ENCODE measurements at regions of chr11 and their contacts with region 1.

Region 1: GRCh38 chr11:44727373-44728287 is 868 bp downstream of the TSPAN18 start:
- DNase-seq: peak; percentile 87
- ATAC-seq: peak; percentile 89
- H3K4me3 ChIP-seq: peak overlapping the region; percentile 54
- H3K27ac ChIP-seq: peak overlapping the region; percentile 65
- H3K4me1 ChIP-seq: peaks cover 24% of the 10 kb centered on the region
- H3K27me3 ChIP-seq: peaks cover 10% of the 10 kb centered on the region
- CTCF ChIP-seq: peak; percentile 95

Region 2: DNA sequence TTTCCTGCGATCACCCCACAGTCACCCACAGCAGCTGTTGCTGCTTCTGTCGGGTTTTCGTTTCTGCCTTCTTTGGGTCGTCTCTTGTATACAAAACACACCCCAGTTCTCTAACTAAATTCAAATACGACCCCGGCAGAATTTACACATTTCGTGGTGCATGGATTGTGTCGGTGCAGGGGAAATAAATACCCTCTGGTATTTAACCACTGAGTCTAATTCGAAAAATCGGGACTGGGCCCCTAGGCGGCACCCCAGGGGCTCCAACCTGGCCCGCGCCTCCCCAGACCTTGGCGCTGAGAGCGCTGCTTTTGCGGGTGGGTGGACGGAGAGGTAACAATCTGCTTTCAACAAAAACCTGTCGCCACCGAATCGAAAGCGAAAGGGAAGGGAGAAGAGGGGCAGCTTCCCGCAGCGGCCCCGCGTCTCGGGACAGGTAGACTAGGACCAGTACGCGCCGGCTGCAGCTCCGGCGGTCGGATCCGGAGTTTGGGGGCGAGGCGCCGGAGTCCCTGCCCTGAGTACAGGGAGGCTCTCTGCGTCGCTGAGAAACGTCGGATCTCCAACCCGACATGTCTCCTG is 422.1 kb before region 1 on chr11:
- intact Hi-C with region 1: no loop called
- DNase-seq: peak; percentile 73
- ATAC-seq: peak; percentile 50
- H3K4me3 ChIP-seq: peak overlapping the region; percentile 57
- H3K27ac ChIP-seq: no peak overlapping the region
- H3K4me1 ChIP-seq: peaks cover 30% of the 10 kb centered on the region
- H3K27me3 ChIP-seq: peaks cover 88% of the 10 kb centered on the region
- CTCF ChIP-seq: no peak

Region 3: DNA sequence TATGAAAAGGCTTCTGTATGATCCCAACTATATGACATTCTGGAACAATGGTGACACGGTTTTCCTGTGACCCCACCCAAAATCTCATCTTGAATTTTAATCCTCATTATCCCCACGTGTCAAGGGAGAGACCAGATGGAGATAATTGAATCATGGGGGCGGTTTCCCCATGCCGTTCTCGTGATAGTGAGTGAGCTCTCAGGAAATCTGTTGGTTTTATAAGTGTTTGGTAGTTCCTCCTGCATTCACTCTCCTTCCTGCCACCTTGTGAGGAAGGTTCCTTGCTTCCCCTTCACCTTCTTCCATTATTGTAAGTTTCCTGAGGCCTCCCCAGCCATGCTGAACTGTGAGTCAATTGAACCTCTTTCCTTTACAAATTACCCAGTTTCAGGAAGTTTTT is 53.9 kb before region 1 on chr11:
- intact Hi-C with region 1: no loop called
- DNase-seq: no peak
- ATAC-seq: no peak
- H3K4me3 ChIP-seq: no peak overlapping the region
- H3K27ac ChIP-seq: no peak overlapping the region
- H3K4me1 ChIP-seq: no peaks in the 10 kb centered on the region
- H3K27me3 ChIP-seq: no peaks in the 10 kb centered on the region
- CTCF ChIP-seq: no peak

Region 4: GRCh38 chr11:44893846-44894617 is 166.4 kb after region 1 on chr11:
- intact Hi-C with region 1: loop called (anchors 5 kb)
- DNase-seq: peak; percentile 75
- ATAC-seq: peak; percentile 79
- H3K4me3 ChIP-seq: no peak overlapping the region
- H3K27ac ChIP-seq: no peak overlapping the region
- H3K4me1 ChIP-seq: no peaks in the 10 kb centered on the region
- H3K27me3 ChIP-seq: no peaks in the 10 kb centered on the region
- CTCF ChIP-seq: peak; percentile 82

Region 5: DNA sequence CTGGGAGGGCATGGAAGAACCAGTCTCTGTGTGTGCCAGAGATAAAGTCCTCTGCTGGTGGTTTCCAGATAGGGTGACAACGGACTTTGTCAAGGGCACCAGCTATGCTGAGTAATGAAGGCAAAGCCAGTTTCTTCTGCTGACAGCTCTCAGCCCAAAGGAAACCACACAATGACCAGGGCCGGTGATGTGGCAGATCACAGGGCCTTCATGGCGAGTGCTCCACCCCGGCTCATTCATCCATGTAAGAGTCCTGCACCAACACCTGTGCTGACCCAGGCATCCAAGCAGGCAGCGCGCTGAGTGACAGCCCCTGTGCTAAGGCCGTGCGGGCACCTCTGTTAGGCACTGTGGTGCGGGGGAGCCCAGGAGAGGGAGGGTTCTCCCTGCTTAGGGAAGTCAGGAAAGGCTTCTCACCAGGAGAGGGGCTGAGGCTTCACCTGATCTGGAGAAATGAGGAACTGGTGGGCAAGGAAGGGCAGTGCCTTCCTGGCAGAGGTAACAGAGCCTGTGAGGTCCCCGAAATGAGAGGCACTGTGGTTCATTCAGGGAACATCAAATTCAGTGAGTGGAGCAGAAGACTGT is 189.3 kb after region 1 on chr11:
- intact Hi-C with region 1: no loop called
- DNase-seq: no peak
- ATAC-seq: no peak
- H3K4me3 ChIP-seq: no peak overlapping the region
- H3K27ac ChIP-seq: no peak overlapping the region
- H3K4me1 ChIP-seq: no peaks in the 10 kb centered on the region
- H3K27me3 ChIP-seq: no peaks in the 10 kb centered on the region
- CTCF ChIP-seq: no peak